Activated CD8-positive, alpha-beta T cell treated with anti-CD3 and anti-CD28 coated beads for 36 hours (primary cell): ENCODE measurements at regions of chr1 and their contacts with region 1.

Region 1: DNA sequence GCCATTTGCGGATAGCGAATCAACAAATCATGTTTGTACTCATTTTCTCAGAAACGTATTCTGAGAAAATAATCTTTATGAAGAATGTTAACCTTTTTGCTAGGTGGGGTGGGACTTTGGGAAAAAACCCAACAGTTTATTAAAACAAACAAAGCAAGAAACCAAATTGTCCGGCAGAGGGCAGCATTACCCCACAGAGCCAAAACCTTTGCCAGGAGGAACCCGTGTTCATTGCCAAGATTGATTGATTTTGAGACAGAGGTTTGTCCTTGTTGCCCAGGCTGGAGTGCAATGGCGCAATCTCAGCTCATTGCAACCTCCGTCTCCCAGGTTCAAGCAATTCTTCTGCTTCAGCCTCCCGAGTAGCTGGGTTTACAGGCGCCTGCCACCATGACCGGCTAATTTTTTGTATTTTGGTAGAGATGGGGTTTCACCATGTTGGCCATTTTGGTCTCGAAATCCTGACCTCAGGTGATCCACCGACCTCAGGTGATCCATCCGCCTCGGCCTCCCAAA is 70.8 kb upstream of the RHOU start:
- DNase-seq: peak; percentile 88
- ATAC-seq: peak; percentile 30
- H3K4me3 Mint-ChIP-seq: no peak overlapping the region
- H3K27ac Mint-ChIP-seq: no peak overlapping the region
- H3K4me1 Mint-ChIP-seq: no peaks in the 10 kb centered on the region
- H3K27me3 Mint-ChIP-seq: peaks cover 3% of the 10 kb centered on the region
- CTCF ChIP-seq: peak; percentile 91

Region 2: DNA sequence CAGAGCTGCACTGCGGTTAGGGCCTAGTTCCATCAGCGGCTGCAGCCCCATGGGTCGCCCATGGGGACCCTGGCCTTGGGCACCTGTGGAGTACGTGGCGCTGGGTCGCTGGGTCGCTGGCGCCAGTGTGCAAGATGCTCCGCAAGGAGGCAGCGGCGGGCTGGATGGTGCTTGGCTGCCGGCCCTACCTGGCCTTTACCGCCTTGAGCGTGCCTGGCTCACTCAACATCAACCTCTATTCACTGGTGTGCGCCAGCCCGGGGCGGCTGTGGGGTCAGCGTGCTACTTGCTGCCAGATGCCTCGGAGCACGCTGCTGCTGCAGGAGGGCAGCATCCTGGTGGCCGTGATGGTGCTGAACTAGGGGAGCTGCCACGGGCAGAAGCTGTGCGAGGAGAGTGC is 14.3 kb before region 1 on chr1:
- CTCF ChIA-PET with region 1: interaction called, 16 read pairs
- POLR2A ChIA-PET with region 1: no interaction called
- intact Hi-C with region 1: no loop called
- DNase-seq: peak; percentile 38
- ATAC-seq: peak; percentile 28
- H3K4me3 Mint-ChIP-seq: no peak overlapping the region
- H3K27ac Mint-ChIP-seq: no peak overlapping the region
- H3K4me1 Mint-ChIP-seq: peaks cover 24% of the 10 kb centered on the region
- H3K27me3 Mint-ChIP-seq: peaks cover 62% of the 10 kb centered on the region
- CTCF ChIP-seq: no peak

Region 3: DNA sequence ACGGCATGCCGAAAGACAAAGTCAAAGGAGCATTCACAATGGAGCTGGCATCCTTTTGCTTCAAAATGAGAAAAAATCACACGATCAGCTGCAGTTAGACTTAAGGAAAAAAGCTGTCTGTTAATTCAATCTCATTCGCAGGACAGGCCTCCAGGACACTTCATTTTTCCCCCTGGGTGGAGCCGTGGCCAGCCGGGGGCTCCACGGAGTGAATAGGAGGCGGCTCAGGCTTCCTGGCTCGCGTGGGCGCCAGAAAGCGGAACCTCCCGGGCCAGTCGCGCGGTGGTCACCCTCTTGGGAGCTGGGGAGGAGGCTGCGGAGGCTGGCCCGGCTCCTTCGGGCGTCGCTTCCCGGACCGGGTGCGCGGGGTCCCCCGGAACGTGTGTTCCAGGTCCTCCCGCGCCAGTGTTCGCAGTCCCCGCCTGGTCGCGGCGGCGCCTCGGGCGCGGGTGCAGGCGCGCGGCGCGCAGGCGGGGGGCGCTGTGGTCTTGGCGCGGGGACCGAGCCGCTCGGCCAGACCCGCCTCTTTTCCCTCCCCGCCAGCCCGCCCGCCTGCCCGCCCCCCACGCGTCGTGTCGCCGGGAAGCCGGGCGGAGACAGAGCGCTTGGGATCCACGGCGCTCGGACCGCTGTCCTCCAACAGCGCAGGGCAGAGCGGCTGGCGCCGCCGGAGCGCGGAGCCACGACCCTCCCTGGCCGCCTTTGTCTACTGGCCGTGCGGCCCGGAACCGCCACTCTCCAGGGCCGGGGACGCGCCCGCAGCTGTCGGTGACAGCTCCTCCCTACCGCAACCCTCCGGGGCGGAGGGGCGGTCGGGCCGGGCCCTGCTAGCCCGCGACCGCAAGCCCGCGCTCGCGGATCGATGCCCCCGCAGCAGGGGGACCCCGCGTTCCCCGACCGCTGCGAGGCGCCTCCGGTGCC is 70.7 kb after region 1 on chr1 and contains the start of gene RHOU:
- CTCF ChIA-PET with region 1: interaction called, 12 read pairs
- POLR2A ChIA-PET with region 1: no interaction called
- intact Hi-C with region 1: no loop called
- DNase-seq: peak; percentile 63
- ATAC-seq: peak; percentile 89
- H3K4me3 Mint-ChIP-seq: peak within 1 kb of the TSS; percentile 68
- H3K27ac Mint-ChIP-seq: no peak within 1 kb of the TSS
- H3K4me1 Mint-ChIP-seq: peaks cover 5% of the 10 kb centered on the region
- H3K27me3 Mint-ChIP-seq: peaks cover 10% of the 10 kb centered on the region
- CTCF ChIP-seq: peak; percentile 87
- total RNA-seq, gene RHOU: 1.2 TPM

Region 4: GRCh38 chr1:228751360-228752113 is 87.1 kb after region 1 on chr1:
- CTCF ChIA-PET with region 1: no interaction called
- POLR2A ChIA-PET with region 1: no interaction called
- intact Hi-C with region 1: no loop called
- DNase-seq: no peak
- ATAC-seq: no peak
- H3K4me3 Mint-ChIP-seq: no peak overlapping the region
- H3K27ac Mint-ChIP-seq: no peak overlapping the region
- H3K4me1 Mint-ChIP-seq: peaks cover 12% of the 10 kb centered on the region
- H3K27me3 Mint-ChIP-seq: peaks cover 21% of the 10 kb centered on the region
- CTCF ChIP-seq: no peak

Region 5: DNA sequence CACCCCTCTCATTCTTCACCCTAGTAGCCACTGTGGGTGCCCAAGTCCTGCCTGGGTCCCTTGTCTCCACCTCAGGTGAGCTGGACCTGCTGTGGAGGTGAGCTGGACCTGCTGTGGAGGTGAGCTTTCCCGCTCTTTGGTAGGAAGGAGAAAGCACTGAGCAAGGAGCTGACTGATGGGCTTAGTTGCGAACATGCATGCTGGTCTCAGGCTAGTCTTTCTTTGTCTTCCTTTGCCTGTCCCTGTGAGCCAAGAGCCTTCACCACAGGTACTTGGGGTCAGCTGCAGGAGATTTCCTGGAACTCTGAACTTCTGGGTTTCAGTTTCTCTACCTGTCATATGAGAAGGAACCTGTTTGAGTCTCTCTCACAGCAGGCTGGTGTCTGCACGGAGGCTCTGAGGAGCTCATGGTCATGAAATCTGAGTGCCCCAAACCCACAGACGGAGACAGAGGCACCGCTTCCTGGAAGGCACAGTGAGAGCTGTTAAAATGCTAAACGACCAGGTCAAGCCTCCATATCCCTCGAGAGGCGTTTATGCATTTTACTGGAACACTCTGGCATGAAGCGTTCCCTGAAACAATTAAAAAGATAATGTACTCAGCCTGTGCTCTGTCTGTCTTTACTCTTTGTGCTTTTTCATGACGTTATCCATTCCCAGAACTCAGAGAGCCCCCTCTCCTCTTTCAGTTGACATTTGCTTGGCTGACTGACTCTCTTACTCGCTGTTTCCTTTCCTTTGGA is 140.4 kb after region 1 on chr1:
- CTCF ChIA-PET with region 1: no interaction called
- POLR2A ChIA-PET with region 1: no interaction called
- intact Hi-C with region 1: no loop called
- DNase-seq: peak; percentile 82
- ATAC-seq: peak; percentile 91
- H3K4me3 Mint-ChIP-seq: peak overlapping the region; percentile 58
- H3K27ac Mint-ChIP-seq: peak overlapping the region; percentile 94
- H3K4me1 Mint-ChIP-seq: peaks cover 39% of the 10 kb centered on the region
- H3K27me3 Mint-ChIP-seq: no peaks in the 10 kb centered on the region
- CTCF ChIP-seq: no peak